ENCODE measurements at regions of chr5 and their contacts with region 1.

Region 1: GRCh38 chr5:79386679-79387078 is 127.3 kb downstream of the HOMER1 start:
- DNase-seq: no peak
- H3K4me3 ChIP-seq: no peak overlapping the region
- H3K27me3 ChIP-seq: no peaks in the 10 kb centered on the region
- CTCF ChIP-seq: no peak

Region 2: DNA sequence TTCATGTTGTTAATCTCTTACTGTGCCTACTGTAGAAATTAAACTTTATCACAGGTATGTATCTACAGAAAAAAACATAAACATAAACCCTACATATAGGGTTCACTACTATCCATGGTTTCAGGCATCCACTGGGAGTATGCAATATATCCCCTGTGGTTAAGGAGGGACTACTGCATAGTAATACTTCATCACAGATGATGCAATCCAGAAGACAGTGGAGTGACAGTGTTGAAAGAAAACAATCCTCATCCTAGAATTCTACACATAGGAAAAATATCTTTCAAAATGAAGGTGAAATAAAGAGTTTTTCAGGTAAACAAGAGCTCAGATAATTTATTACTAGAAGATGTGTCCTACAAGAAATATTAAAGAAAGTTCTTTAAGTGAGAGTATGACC is 21.3 kb after region 1 on chr5:
- CTCF ChIA-PET with region 1: no interaction called
- POLR2A ChIA-PET with region 1: interaction called, 10 read pairs
- DNase-seq: no peak
- H3K4me3 ChIP-seq: no peak overlapping the region
- H3K27me3 ChIP-seq: no peaks in the 10 kb centered on the region
- CTCF ChIP-seq: no peak

Measured in BJ (cell line).